Cardiac septum (tissue), 1 donor: ENCODE measurements at regions of chr2 and their contacts with region 1.

Region 1: GRCh38 chr2:217166241-217166850 is 306.5 kb upstream of the TNP1 start:
- DNase-seq: no peak

Region 2: DNA sequence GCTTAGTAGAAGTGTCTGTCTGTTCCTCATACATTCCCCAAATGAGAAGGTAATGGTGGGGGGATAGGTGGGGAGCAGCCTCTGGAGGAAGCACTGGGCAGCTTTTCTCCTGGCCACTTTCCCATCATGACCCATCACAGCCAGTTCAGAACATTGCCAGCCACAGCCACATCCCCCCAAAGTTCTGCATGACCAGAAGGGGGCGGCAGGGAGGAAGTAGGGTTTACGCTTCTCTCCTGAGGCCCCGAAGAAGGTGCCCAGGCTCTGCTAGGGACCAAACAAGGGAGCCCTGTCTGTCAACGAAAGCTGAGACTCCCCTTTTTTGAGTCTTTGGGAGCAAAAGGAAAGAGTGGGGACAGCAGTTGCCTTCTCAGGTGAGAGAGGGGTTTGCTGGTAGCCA is 478.7 kb before region 1 on chr2:
- intact Hi-C with region 1: loop called (anchors 5 kb)
- DNase-seq: peak; percentile 61

Region 3: GRCh38 chr2:217074576-217075255 is 91.6 kb before region 1 on chr2:
- intact Hi-C with region 1: loop called (anchors 5 kb)
- DNase-seq: no peak

Region 4: DNA sequence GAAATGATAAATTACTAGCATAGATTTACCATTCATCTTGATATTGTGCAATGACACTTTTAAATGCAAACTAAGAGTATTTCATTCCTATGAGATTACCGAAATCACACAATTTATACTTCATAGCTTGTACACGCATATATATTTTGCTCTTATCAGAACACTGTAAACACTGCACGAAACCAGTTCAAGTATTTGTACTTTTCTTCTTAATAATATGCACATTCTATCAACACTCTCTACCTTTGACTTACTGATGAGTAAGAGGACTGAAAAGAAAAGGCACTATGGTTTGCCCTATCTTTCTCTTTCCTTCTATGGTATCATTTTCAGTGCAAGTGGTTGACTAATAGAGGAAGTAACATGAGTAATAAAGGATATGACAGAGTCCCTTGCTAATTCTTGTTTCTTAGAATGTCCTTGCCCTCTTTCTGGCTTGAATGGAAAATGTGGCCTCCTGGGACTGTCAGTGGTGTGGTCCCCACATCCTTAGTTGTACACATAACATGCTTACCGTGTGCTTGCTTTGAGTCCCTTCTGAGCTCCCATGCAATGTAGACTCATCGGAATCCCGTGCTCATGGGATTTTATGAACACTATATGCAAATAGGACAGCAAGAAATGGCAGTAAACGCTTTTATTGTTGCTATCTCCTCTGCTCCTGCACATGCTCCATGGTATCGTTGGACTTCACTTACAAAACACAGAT is 57.0 kb after region 1 on chr2:
- intact Hi-C with region 1: no loop called
- DNase-seq: no peak